ENCODE measurements at regions of chr11 and their contacts with region 1.

Region 1: GRCh38 chr11:123261345-123262106 is 66.5 kb upstream of the CLMP start:
- DNase-seq: peak; percentile 80
- H3K4me3 Mint-ChIP-seq: peak overlapping the region; percentile 49
- H3K27ac Mint-ChIP-seq: no peak overlapping the region
- H3K4me1 Mint-ChIP-seq: no peaks in the 10 kb centered on the region
- H3K27me3 Mint-ChIP-seq: peaks cover 25% of the 10 kb centered on the region
- CTCF ChIP-seq: peak; percentile 90

Region 2: GRCh38 chr11:122954455-122954854 is 307.1 kb before region 1 on chr11:
- CTCF ChIA-PET with region 1: no interaction called
- POLR2A ChIA-PET with region 1: no interaction called
- intact Hi-C with region 1: no loop called
- DNase-seq: no peak
- H3K4me3 Mint-ChIP-seq: no peak overlapping the region
- H3K27ac Mint-ChIP-seq: no peak overlapping the region
- H3K4me1 Mint-ChIP-seq: no peaks in the 10 kb centered on the region
- H3K27me3 Mint-ChIP-seq: peaks cover 31% of the 10 kb centered on the region
- CTCF ChIP-seq: no peak

Region 3: GRCh38 chr11:123103326-123103980 is 158.1 kb before region 1 on chr11:
- CTCF ChIA-PET with region 1: interaction called, 89 read pairs
- POLR2A ChIA-PET with region 1: interaction called, 5 read pairs
- intact Hi-C with region 1: loop called (anchors 1 kb)
- DNase-seq: peak; percentile 69
- H3K4me3 Mint-ChIP-seq: no peak overlapping the region
- H3K27ac Mint-ChIP-seq: no peak overlapping the region
- H3K4me1 Mint-ChIP-seq: peaks cover 9% of the 10 kb centered on the region
- H3K27me3 Mint-ChIP-seq: no peaks in the 10 kb centered on the region
- CTCF ChIP-seq: peak; percentile 41

Region 4: DNA sequence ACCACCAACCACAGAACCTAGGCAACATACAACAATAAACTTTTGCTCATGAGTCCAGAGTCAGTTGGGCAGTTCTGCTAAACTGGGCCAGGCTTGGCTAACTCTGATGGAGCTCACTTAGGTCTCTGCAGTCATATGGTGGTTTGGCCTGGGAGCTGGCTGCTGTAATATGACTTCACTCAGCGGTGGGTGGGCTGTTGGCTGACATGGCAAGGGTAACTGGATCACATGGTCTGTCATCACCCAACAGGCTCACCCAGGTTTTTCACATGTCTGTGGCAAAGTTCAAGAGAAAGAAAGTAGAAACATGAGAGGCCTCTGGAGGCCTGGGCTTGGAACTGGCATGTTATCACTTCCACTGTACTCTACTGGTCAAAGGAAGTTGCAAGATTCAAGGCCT is 23.2 kb before region 1 on chr11:
- CTCF ChIA-PET with region 1: interaction called, 15 read pairs
- POLR2A ChIA-PET with region 1: no interaction called
- intact Hi-C with region 1: no loop called
- DNase-seq: no peak
- H3K4me3 Mint-ChIP-seq: no peak overlapping the region
- H3K27ac Mint-ChIP-seq: no peak overlapping the region
- H3K4me1 Mint-ChIP-seq: no peaks in the 10 kb centered on the region
- H3K27me3 Mint-ChIP-seq: no peaks in the 10 kb centered on the region
- CTCF ChIP-seq: no peak

Region 5: DNA sequence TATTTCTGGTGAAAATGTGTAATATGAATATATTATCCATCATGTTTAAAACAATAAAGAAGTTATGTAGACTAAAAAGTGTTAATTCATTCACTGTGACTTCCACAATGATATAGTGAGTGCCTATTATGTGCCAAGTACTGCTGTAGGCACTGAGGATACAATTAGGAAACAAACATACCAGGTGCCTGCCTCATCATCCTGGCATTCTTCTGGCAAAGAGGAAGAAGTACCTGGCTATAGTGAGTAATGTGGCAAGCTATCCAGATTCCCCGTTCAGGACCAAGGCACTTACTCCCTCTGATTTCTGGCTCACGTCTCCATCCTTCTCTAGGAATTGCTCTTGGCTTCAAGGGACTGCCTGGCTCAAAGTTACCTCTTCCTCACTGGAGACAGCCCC is 11.0 kb after region 1 on chr11:
- CTCF ChIA-PET with region 1: interaction called, 58 read pairs
- POLR2A ChIA-PET with region 1: no interaction called
- intact Hi-C with region 1: no loop called
- DNase-seq: peak; percentile 75
- H3K4me3 Mint-ChIP-seq: no peak overlapping the region
- H3K27ac Mint-ChIP-seq: no peak overlapping the region
- H3K4me1 Mint-ChIP-seq: peaks cover 7% of the 10 kb centered on the region
- H3K27me3 Mint-ChIP-seq: peaks cover 4% of the 10 kb centered on the region
- CTCF ChIP-seq: no peak